GM12878 (cell line): ENCODE measurements at regions of chr4 and their contacts with region 1.

Region 1: GRCh38 chr4:45841791-45842190 is 282.1 kb downstream of the GABRG1 start:
- DNase-seq: no peak
- ATAC-seq: no peak
- H3K4me3 ChIP-seq: no peak overlapping the region
- H3K27ac ChIP-seq: no peak overlapping the region
- H3K4me1 ChIP-seq: no peaks in the 10 kb centered on the region
- H3K27me3 ChIP-seq: no peaks in the 10 kb centered on the region
- CTCF ChIP-seq: no peak
- EP300 ChIP-seq: no peak
- POLR2A ChIP-seq: no peak
- RAD21 ChIP-seq: no peak

Region 2: GRCh38 chr4:44583393-44583792 is 1258.4 kb before region 1 on chr4:
- CTCF ChIA-PET with region 1: no interaction called
- POLR2A ChIA-PET with region 1: no interaction called
- RAD21 ChIA-PET with region 1: no interaction called
- SMC1A ChIA-PET with region 1: no interaction called
- in situ Hi-C with region 1: no loop called
- intact Hi-C with region 1: no loop called
- DNase-seq: no peak
- ATAC-seq: peak; percentile 74
- H3K4me3 ChIP-seq: no peak overlapping the region
- H3K27ac ChIP-seq: no peak overlapping the region
- H3K4me1 ChIP-seq: no peaks in the 10 kb centered on the region
- H3K27me3 ChIP-seq: no peaks in the 10 kb centered on the region
- CTCF ChIP-seq: peak; percentile 26 to 46 (median 36); a peak in 4 of 6 replicates
- EP300 ChIP-seq: no peak
- POLR2A ChIP-seq: no peak
- RAD21 ChIP-seq: 0 out of 2 replicates have a peak, but pooled peaks have one; percentile 14

Region 3: DNA sequence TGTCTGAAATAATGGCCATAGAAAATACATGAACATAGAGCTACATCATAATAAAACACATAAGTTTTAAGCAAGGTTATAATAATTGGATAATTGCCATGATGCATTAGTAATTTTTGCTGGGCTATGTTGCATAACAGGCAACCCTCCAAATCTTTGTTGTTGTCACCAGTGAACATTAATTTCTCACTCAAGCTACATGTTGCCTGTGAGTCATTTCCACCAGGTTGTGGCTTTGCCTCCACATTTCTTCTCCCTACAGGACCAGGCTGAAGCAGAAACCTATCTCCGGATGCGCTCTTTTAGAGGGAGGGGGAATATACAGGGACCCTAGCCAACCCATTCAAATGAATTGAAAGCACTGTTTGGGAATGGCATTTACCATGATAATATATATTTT is 65.6 kb before region 1 on chr4:
- CTCF ChIA-PET with region 1: no interaction called
- POLR2A ChIA-PET with region 1: no interaction called
- RAD21 ChIA-PET with region 1: no interaction called
- SMC1A ChIA-PET with region 1: no interaction called
- in situ Hi-C with region 1: no loop called
- intact Hi-C with region 1: no loop called
- DNase-seq: no peak
- ATAC-seq: no peak
- H3K4me3 ChIP-seq: no peak overlapping the region
- H3K27ac ChIP-seq: no peak overlapping the region
- H3K4me1 ChIP-seq: no peaks in the 10 kb centered on the region
- H3K27me3 ChIP-seq: no peaks in the 10 kb centered on the region
- CTCF ChIP-seq: no peak
- EP300 ChIP-seq: no peak
- POLR2A ChIP-seq: no peak
- RAD21 ChIP-seq: no peak

Region 4: DNA sequence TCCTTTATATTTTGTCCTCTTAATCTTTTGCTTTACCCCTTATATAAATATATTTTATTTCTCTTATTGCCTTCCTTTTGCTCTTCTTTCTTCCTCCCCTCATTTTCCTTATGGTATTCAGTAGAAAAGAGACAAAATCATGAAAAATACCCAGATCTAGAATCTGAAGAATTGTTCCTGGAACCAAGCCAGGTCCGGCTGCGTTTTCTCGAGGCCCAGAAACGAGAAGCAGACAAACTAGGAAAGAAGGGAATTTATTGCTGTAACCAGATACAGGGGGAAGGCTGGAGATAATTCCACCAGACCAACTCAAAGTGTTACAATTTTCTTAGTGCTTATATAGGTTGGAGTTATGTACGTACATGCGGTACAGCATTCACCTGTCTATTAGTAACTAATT is 46.7 kb before region 1 on chr4:
- CTCF ChIA-PET with region 1: no interaction called
- POLR2A ChIA-PET with region 1: no interaction called
- RAD21 ChIA-PET with region 1: no interaction called
- SMC1A ChIA-PET with region 1: no interaction called
- in situ Hi-C with region 1: no loop called
- intact Hi-C with region 1: loop called (anchors 5 kb)
- DNase-seq: no peak
- ATAC-seq: no peak
- H3K4me3 ChIP-seq: no peak overlapping the region
- H3K27ac ChIP-seq: no peak overlapping the region
- H3K4me1 ChIP-seq: no peaks in the 10 kb centered on the region
- H3K27me3 ChIP-seq: no peaks in the 10 kb centered on the region
- CTCF ChIP-seq: no peak
- EP300 ChIP-seq: no peak
- POLR2A ChIP-seq: no peak
- RAD21 ChIP-seq: no peak